Uterus (tissue), 4 donors: ENCODE measurements at regions of chr16 and their contacts with region 1.

Region 1: DNA sequence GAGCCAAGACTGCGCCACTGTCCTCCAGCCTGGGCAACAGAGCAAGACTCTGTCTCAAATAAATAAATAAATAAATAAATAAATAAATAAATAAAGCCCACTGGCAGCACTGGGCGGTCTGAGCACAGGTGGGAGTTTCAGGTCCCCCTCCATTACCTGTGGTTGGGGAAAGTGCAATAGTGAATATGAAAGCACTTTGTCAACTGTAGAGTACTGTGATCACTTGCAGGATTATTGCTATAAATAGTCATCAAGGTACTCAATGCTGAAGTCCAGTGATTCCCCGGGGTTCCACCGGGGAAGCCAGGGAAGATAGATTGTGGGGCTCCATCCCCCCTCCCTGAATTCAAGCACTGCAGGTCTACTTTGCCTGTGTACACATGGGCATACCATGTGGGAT is 42.7 kb upstream of the CPNE2 start:
- DNase-seq: no peak
- H3K4me3 ChIP-seq: no peak overlapping the region
- H3K27ac ChIP-seq: no peak overlapping the region
- H3K4me1 ChIP-seq: no peaks in the 10 kb centered on the region
- H3K27me3 ChIP-seq: no peaks in the 10 kb centered on the region
- CTCF ChIP-seq: no peak
- POLR2A ChIP-seq: no peak

Region 2: GRCh38 chr16:56866943-56867830 is 182.5 kb before region 1 on chr16:
- intact Hi-C with region 1: loop called (anchors 10 kb)
- DNase-seq: peak in 1 of 2 donors; percentile 41
- H3K4me3 ChIP-seq: no peak overlapping the region
- H3K27ac ChIP-seq: no peak overlapping the region
- H3K4me1 ChIP-seq: no peaks in the 10 kb centered on the region
- H3K27me3 ChIP-seq: no peaks in the 10 kb centered on the region
- CTCF ChIP-seq: peak; percentile 70 to 82 (median 76)
- POLR2A ChIP-seq: no peak

Region 3: GRCh38 chr16:57147381-57148221 is 97.9 kb after region 1 on chr16:
- intact Hi-C with region 1: no loop called
- DNase-seq: no peak
- H3K4me3 ChIP-seq: no peak overlapping the region
- H3K27ac ChIP-seq: peak overlapping the region in 1 of 2 donors; percentile 27
- H3K4me1 ChIP-seq: no peaks in the 10 kb centered on the region
- H3K27me3 ChIP-seq: no peaks in the 10 kb centered on the region
- CTCF ChIP-seq: no peak
- POLR2A ChIP-seq: no peak